ENCODE measurements at regions of chr3 and their contacts with region 1.

Region 1: DNA sequence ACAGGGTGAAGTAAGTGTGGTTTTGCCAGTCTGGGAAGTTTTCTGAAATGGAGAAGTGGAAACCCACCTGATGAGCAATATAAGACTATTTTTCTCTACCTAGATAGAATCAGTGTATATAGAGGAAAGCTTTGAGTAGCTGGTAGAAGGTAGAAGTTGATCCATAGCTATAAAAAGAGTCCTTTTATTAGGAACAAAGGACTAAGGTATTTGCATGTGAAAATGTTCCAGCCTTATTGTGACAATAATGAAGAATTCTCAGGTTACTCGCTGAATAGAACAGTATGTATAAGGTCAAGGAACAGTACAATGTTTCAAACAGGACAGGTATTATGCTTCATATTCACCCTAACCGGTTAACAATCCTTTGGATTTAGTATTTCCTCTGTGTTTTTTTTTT is 972.2 kb downstream of the OTOL1 start:
- DNase-seq: no peak
- H3K4me3 ChIP-seq: no peak overlapping the region
- H3K27ac ChIP-seq: no peak overlapping the region
- H3K4me1 ChIP-seq: no peaks in the 10 kb centered on the region
- H3K27me3 ChIP-seq: no peaks in the 10 kb centered on the region
- CTCF ChIP-seq: no peak
- EP300 ChIP-seq: no peak
- POLR2A ChIP-seq: no peak

Region 2: DNA sequence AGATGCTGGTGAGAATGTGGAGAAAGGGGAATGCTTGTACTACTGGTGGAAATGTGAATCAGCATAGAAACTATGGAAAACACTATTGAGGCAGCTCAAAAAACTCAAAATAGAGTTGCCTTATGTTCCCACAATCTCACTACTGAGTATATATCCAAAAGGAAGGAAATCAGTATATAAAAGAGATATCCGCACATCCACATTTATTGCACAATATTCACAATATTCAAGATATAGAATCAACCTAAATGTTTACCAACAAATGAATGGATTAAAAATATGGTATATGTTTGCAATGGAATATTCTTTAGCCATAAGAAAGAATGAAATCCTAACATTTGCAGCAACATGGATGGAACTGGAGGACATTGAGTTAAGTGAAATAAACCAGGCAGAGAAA is 285.4 kb before region 1 on chr3:
- intact Hi-C with region 1: no loop called
- DNase-seq: no peak
- H3K4me3 ChIP-seq: no peak overlapping the region
- H3K27ac ChIP-seq: no peak overlapping the region
- H3K4me1 ChIP-seq: no peaks in the 10 kb centered on the region
- H3K27me3 ChIP-seq: peaks cover 4% of the 10 kb centered on the region
- CTCF ChIP-seq: no peak
- EP300 ChIP-seq: no peak
- POLR2A ChIP-seq: no peak

Region 3: GRCh38 chr3:162376761-162377160 is 92.0 kb before region 1 on chr3:
- intact Hi-C with region 1: loop called in 1 of 4 experiments (anchors 5 kb)
- DNase-seq: no peak
- H3K4me3 ChIP-seq: no peak overlapping the region
- H3K27ac ChIP-seq: no peak overlapping the region
- H3K4me1 ChIP-seq: no peaks in the 10 kb centered on the region
- H3K27me3 ChIP-seq: no peaks in the 10 kb centered on the region
- CTCF ChIP-seq: no peak
- EP300 ChIP-seq: no peak
- POLR2A ChIP-seq: no peak

Region 4: DNA sequence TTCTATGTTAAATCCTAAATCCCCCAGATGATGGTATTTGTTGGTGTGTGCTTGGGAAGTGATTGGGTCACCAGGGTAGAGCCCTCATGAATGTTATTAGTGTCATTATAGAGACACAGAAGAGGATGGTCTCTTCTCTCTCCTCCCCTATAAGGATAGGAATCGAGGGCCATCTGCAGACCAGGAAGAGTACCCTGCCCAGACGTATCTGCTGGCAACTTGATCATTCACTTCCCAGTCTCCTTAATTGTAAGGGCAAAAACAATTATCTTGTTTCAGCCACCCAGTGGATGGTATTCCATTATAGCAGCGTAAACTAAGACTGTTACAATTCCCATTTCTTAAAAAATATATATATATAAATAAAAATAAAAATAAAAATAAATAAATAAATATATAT is 1717.3 kb after region 1 on chr3:
- intact Hi-C with region 1: no loop called
- DNase-seq: no peak
- H3K4me3 ChIP-seq: no peak overlapping the region
- H3K27ac ChIP-seq: no peak overlapping the region
- H3K4me1 ChIP-seq: no peaks in the 10 kb centered on the region
- H3K27me3 ChIP-seq: no peaks in the 10 kb centered on the region
- CTCF ChIP-seq: no peak
- EP300 ChIP-seq: no peak
- POLR2A ChIP-seq: no peak